H1 (cell line): ENCODE measurements at regions of chr10 and their contacts with region 1.

Region 1: GRCh38 chr10:117137031-117137910 is 799 bp downstream of the VAX1 start:
- DNase-seq: peak in 1 of 2 experiments; percentile 74
- H3K4me3 ChIP-seq: peak overlapping the region; percentile 10 to 55 (median 30); a peak in 7 of 8 replicates
- H3K27ac ChIP-seq: no peak overlapping the region
- H3K4me1 ChIP-seq: peaks cover 3 to 32% (median 16%) of the 10 kb centered on the region in 4 experiments
- H3K27me3 ChIP-seq: peaks cover 96 to 99% (median 98%) of the 10 kb centered on the region in 4 experiments
- CTCF ChIP-seq: no peak
- EP300 ChIP-seq: no peak
- POLR2A ChIP-seq: no peak
- RAD21 ChIP-seq: no peak

Region 2: GRCh38 chr10:117047947-117048346 is 89.3 kb before region 1 on chr10:
- CTCF ChIA-PET with region 1: no interaction called
- POLR2A ChIA-PET with region 1: no interaction called
- DNase-seq: no peak
- H3K4me3 ChIP-seq: no peak overlapping the region
- H3K27ac ChIP-seq: no peak overlapping the region
- H3K4me1 ChIP-seq: no peaks in the 10 kb centered on the region
- H3K27me3 ChIP-seq: no peaks in the 10 kb centered on the region; a peak in 1 of 7 replicates
- CTCF ChIP-seq: no peak
- EP300 ChIP-seq: no peak
- POLR2A ChIP-seq: no peak
- RAD21 ChIP-seq: no peak

Region 3: DNA sequence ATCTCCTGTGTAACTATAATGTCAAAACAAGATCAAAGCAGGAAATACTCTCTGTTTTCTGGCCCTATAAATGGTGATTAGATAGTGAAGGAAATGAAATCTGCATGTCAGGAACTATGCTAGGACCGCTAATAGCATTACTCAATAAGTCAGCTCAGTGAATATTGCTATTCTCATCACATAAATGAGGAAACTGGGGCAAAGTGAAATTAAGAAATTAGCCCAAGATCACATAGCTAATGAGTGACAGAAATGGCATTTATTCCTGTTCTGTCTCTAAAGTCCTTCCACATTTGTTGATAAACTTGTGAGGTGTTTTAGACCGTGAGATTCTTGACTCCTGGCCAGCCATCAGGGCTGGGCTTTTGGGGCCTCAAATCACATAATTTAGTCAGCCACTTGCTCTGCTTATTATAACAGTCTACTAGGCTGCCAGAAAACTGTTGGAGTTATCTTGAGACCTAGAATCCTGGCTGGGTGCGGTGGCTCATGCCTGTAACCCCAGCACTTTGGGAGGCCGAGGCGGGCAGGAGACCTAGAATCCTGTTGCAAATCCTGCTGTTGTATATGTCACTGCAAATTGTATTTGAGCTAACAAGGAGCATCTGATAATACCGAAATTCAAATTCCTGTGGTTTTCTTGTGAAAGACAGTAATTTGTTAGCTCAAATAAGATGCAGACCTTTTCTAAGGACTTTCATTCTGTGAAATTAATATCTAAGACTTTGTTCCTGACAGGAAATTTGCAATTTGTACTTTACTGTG is 65.8 kb before region 1 on chr10:
- CTCF ChIA-PET with region 1: no interaction called
- POLR2A ChIA-PET with region 1: no interaction called
- DNase-seq: no peak
- H3K4me3 ChIP-seq: no peak overlapping the region
- H3K27ac ChIP-seq: no peak overlapping the region
- H3K4me1 ChIP-seq: no peaks in the 10 kb centered on the region; a peak in 1 of 7 replicates
- H3K27me3 ChIP-seq: no peaks in the 10 kb centered on the region
- CTCF ChIP-seq: no peak
- EP300 ChIP-seq: no peak
- POLR2A ChIP-seq: no peak
- RAD21 ChIP-seq: no peak

Region 4: GRCh38 chr10:117152668-117153067 is 15.4 kb after region 1 on chr10:
- CTCF ChIA-PET with region 1: interaction called, 20 read pairs
- POLR2A ChIA-PET with region 1: interaction called, 7 read pairs
- DNase-seq: no peak
- H3K4me3 ChIP-seq: no peak overlapping the region
- H3K27ac ChIP-seq: no peak overlapping the region
- H3K4me1 ChIP-seq: no peaks in the 10 kb centered on the region
- H3K27me3 ChIP-seq: peaks cover 60 to 95% (median 81%) of the 10 kb centered on the region in 4 experiments
- CTCF ChIP-seq: no peak
- EP300 ChIP-seq: no peak
- POLR2A ChIP-seq: no peak
- RAD21 ChIP-seq: no peak